Posterior cingulate gyrus (tissue), 11 donors: ENCODE measurements at regions of chr2 and their contacts with region 1.

Region 1: GRCh38 chr2:240434728-240435456 is 571 bp upstream of the GPC1 start:
- DNase-seq: peak; percentile 84 to 98 (median 90)

Region 2: DNA sequence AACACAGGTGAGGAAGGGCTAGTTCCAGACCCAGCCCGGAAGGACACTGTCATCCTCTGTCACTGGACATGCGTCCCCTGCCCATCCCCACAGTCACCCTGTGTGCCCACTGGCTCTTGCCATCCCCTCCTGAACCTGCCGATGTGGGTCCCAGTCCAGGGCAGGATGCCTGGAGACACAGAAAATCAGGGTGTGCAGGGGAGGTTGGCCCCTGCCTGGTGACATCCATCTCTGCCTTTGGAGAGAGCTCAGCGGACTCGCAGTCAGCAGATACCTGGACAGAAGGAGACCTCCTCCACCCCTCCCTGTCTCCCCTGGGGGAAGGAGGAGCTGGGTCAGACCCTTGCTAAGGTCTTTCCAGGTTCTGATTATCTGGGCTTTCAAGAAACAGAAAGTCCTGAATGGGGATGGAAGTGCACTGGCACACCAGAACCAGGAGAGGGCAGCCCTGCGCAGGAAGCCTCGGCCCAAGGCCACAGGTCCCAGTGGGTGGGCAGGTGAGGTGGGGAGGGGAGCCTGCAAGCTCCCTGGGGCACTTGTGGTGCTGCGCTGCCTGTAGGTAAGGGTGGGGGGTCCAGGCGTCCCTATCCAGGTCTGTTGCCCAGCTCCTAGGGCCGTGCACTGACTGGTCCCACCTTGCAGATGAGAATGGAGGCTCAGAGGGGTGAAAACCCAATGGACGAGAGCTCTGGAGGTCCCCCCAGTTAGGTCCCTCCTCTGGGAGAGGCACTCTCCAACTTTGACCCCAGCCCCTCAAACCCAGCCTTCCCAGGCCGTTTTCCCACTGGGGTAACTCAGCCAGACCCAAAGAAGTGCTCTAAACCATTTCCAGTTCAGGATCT is 284.7 kb before region 1 on chr2:
- intact Hi-C with region 1: loop called (anchors 5 kb)
- DNase-seq: peak in 9 of 10 donors; percentile 41 to 93 (median 56)

Region 3: GRCh38 chr2:240232961-240233893 is 201.7 kb before region 1 on chr2:
- intact Hi-C with region 1: loop called (anchors 1 kb)
- DNase-seq: peak; percentile 58 to 97 (median 86)